GM12878 (cell line): ENCODE measurements at regions of chr10 and their contacts with region 1.

Region 1: DNA sequence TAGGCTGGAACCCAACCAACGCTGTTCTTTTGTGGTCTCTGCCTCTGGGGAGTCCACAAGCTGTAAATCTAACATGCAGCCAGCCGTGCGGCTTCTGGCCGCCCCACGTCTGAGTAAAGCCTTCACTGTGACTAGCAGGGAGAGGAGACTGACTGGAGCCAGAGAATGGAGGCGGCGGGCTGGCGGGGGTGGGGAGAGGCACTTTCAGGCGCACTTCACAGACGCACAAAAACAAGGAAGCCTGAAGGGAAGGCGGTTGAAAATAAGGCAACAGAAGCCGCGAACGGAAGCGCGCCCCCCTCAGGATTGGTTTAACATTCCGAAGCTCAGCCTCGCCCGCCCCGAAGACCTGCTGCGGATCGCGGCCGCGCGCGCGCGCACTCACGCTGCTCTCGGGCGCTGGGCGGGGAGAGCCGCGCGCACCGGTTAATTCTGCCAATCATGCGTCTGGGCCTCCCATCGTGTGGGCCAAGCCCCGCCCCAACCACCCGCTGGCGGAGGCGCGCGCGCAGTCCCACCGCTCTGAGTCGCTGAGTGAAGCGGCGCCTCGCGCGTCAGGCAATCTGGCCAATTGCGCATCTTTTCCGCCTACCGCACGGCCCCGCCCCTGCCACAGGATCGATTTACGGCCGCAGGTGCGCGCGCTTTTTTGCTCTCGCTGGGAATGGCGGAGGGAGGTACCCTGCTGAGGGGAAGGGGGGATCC is at the start of gene SFR1:
- DNase-seq: peak; percentile 93
- ATAC-seq: peak; percentile 93
- H3K4me3 ChIP-seq: peak within 1 kb of the TSS; percentile 98
- H3K27ac ChIP-seq: peak within 1 kb of the TSS; percentile 94
- H3K4me1 ChIP-seq: peaks cover 11% of the 10 kb centered on the region; the same call in 1 of the 2 replicates
- H3K27me3 ChIP-seq: no peaks in the 10 kb centered on the region; a peak in 1 of 4 replicates
- CTCF ChIP-seq: peak; percentile 56 to 81 (median 64); a peak in 5 of 6 replicates
- EP300 ChIP-seq: 0 out of 4 replicates have a peak, but pooled peaks of 1 of the 2 experiments have one; percentile 3
- POLR2A ChIP-seq: peak; percentile 87
- RAD21 ChIP-seq: 0 out of 2 replicates have a peak, but pooled peaks have one; percentile 20
- polyA plus RNA-seq, gene SFR1: 25.4 to 31.5 TPM

Region 2: DNA sequence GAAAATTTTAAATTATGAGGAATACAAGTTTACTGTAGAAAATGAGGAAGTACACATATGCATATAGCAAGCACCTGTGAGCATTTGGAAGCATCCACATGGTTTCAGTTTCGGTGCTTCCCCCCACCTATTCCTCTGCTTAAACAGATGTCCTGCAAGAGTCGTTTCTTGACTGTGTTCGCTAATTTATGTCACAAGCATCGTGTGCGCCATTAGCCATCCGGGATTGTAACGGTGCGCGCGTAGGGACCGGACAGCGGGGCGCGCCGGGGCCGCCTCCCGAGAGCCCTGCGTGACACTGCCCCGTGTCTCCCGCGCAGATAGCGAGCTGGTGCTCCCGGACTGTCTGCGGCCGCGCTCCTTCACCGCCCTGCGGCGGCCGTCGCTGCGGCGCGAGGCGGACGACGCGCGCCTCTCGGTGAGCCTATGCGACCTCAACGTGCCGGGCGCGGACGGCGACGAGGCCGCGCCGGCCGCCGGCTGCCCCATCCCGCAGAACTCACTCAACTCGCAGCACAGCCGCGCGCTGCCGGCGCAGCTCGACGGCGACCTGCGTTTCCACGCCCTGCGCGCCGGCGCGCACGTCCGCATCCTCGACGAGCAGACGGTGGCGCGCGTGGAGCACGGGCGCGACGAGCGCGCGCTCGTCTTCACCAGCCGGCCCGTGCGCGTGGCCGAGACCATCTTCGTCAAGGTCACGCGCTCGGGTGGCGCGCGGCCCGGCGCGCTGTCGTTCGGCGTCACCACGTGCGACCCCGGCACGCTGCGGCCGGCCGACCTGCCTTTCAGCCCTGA is 537.3 kb before region 1 on chr10:
- CTCF ChIA-PET with region 1: no interaction called
- POLR2A ChIA-PET with region 1: no interaction called
- RAD21 ChIA-PET with region 1: no interaction called
- SMC1A ChIA-PET with region 1: no interaction called
- in situ Hi-C with region 1: no loop called
- intact Hi-C with region 1: no loop called
- DNase-seq: no peak
- ATAC-seq: peak; percentile 41
- H3K4me3 ChIP-seq: peak overlapping the region; percentile 55; the same call in 1 of the 2 replicates
- H3K27ac ChIP-seq: no peak overlapping the region
- H3K4me1 ChIP-seq: 0 out of 2 replicates have a peak, but pooled peaks cover 5% of the 10 kb centered on the region
- H3K27me3 ChIP-seq: no peaks in the 10 kb centered on the region; a peak in 1 of 4 replicates
- CTCF ChIP-seq: no peak
- EP300 ChIP-seq: no peak
- POLR2A ChIP-seq: peak; percentile 68
- RAD21 ChIP-seq: no peak

Region 3: GRCh38 chr10:103696411-103697145 is 425.1 kb before region 1 on chr10:
- CTCF ChIA-PET with region 1: no interaction called
- POLR2A ChIA-PET with region 1: no interaction called
- RAD21 ChIA-PET with region 1: no interaction called
- SMC1A ChIA-PET with region 1: interaction called, 3 read pairs
- in situ Hi-C with region 1: no loop called
- intact Hi-C with region 1: loop called (anchors 10 kb)
- DNase-seq: no peak
- ATAC-seq: peak; percentile 61
- H3K4me3 ChIP-seq: no peak overlapping the region
- H3K27ac ChIP-seq: peak overlapping the region; percentile 54
- H3K4me1 ChIP-seq: peaks cover 29% of the 10 kb centered on the region
- H3K27me3 ChIP-seq: no peaks in the 10 kb centered on the region
- CTCF ChIP-seq: peak; percentile 33 to 50 (median 44); a peak in 5 of 6 replicates
- EP300 ChIP-seq: no peak
- POLR2A ChIP-seq: peak; percentile 55; the same call in 1 of the 2 replicates
- RAD21 ChIP-seq: no peak

Region 4: DNA sequence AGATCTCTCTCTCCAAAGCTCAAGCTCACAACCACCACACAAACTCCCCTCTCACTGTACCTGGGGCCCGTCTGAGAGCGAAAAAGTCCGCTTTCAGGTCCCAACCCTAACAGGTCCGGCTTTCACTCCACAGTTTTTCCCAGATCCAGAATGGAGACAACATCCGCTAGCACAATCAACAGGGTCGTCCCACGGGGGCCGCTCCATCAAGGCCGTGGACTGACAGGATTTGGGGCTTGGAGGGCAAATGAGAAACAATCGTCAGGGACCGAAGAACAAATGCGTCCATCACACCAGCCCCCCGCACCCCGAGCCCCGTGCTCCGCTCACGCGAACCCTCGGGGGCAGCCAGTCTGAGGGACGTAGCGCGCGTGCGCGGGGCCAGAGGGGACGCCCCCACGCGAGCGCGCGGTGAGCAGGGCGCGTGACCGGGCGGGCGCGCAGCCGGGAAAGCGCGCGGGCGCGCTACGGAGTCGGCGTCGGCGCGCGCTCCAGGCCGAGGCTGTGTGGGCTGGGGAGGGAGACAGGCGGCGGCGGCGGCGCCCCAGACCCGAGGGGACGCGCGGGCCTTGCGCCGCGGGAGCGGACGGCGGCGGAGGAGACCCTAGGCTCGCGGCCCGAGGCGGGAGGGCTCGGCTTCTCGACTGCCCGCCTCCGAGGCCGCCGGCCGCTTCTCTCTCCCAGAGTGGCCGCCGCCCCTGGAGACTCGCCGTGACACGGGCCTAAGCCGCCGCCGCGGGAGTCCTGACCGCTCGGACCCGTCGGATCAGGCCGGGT is 154.8 kb before region 1 on chr10 and contains the start of gene SLK:
- CTCF ChIA-PET with region 1: interaction called, 6 read pairs
- POLR2A ChIA-PET with region 1: interaction called, 19 read pairs
- RAD21 ChIA-PET with region 1: interaction called, 4 read pairs
- SMC1A ChIA-PET with region 1: interaction called, 5 read pairs
- in situ Hi-C with region 1: loop called (anchors 5 kb)
- intact Hi-C with region 1: loop called (anchors 1 kb)
- DNase-seq: no peak
- ATAC-seq: peak; percentile 75
- H3K4me3 ChIP-seq: peak within 1 kb of the TSS; percentile 87
- H3K27ac ChIP-seq: peak within 1 kb of the TSS; percentile 77
- H3K4me1 ChIP-seq: no peaks in the 10 kb centered on the region; the same call in 1 of the 2 replicates
- H3K27me3 ChIP-seq: no peaks in the 10 kb centered on the region
- CTCF ChIP-seq: no peak
- EP300 ChIP-seq: no peak
- POLR2A ChIP-seq: peak; percentile 92
- RAD21 ChIP-seq: no peak
- polyA plus RNA-seq, gene SLK: 6.0 to 6.4 TPM

Region 5: GRCh38 chr10:104005172-104005863 is 116.4 kb before region 1 on chr10:
- CTCF ChIA-PET with region 1: interaction called, 12 read pairs
- POLR2A ChIA-PET with region 1: interaction called, 6 read pairs
- RAD21 ChIA-PET with region 1: no interaction called
- SMC1A ChIA-PET with region 1: interaction called, 9 read pairs
- in situ Hi-C with region 1: no loop called
- intact Hi-C with region 1: no loop called
- DNase-seq: no peak
- ATAC-seq: no peak
- H3K4me3 ChIP-seq: no peak overlapping the region
- H3K27ac ChIP-seq: no peak overlapping the region
- H3K4me1 ChIP-seq: no peaks in the 10 kb centered on the region
- H3K27me3 ChIP-seq: no peaks in the 10 kb centered on the region
- CTCF ChIP-seq: no peak
- EP300 ChIP-seq: no peak
- POLR2A ChIP-seq: no peak
- RAD21 ChIP-seq: no peak

Region 6: GRCh38 chr10:104080762-104081161 is 40.9 kb before region 1 on chr10:
- CTCF ChIA-PET with region 1: interaction called, 40 read pairs
- POLR2A ChIA-PET with region 1: interaction called, 5 read pairs
- RAD21 ChIA-PET with region 1: interaction called, 11 read pairs
- SMC1A ChIA-PET with region 1: interaction called, 36 read pairs
- in situ Hi-C with region 1: no loop called
- intact Hi-C with region 1: no loop called
- DNase-seq: no peak
- ATAC-seq: peak; percentile 69
- H3K4me3 ChIP-seq: no peak overlapping the region
- H3K27ac ChIP-seq: no peak overlapping the region
- H3K4me1 ChIP-seq: no peaks in the 10 kb centered on the region
- H3K27me3 ChIP-seq: no peaks in the 10 kb centered on the region
- CTCF ChIP-seq: peak; percentile 47 to 53 (median 52); a peak in 5 of 6 replicates
- EP300 ChIP-seq: no peak
- POLR2A ChIP-seq: no peak
- RAD21 ChIP-seq: peak; percentile 46

Region 7: DNA sequence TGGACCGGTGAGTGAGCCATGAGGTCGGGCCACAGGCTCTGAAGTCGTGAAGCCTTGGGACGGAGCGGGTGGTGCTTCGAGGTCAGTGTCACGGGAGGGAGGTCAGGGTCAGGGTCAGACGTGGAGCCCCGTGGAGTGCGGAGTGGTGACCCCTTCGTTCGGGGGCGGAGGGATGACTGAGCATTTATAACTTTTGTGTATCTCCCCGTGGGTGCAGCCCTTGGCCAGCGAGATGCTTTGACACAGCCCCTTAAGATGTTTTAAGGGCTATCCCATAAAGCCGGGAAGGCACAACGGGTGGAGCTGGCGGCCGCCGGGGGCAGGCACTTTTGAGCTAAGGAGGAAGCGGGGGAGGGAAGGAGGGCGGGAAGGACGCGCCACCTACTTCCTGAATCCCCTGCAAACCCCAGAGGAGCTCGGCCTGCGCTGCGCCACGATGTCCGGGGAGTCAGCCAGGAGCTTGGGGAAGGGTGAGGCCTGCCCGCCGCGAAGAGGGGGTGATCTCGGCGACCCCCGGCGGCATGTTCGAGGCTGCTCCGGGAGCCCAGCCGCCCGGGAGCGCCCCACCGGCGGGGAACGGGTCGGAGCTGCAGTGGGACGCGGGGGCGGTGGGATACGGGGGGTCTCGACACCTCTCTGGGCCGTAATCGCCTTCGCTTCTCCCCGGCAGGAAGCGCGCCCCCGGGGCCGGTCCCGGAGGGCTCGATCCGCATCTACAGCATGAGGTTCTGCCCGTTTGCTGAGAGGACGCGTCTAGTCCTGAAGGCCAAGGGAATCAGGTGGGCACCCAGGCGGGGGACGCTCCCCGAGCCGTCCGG is 133.0 kb after region 1 on chr10 and contains the start of gene GSTO1:
- CTCF ChIA-PET with region 1: no interaction called
- POLR2A ChIA-PET with region 1: interaction called, 14 read pairs
- RAD21 ChIA-PET with region 1: interaction called, 3 read pairs
- SMC1A ChIA-PET with region 1: interaction called, 5 read pairs
- in situ Hi-C with region 1: no loop called
- intact Hi-C with region 1: no loop called
- DNase-seq: peak; percentile 30
- ATAC-seq: peak; percentile 89
- H3K4me3 ChIP-seq: peak within 1 kb of the TSS; percentile 81
- H3K27ac ChIP-seq: peak within 1 kb of the TSS; percentile 89
- H3K4me1 ChIP-seq: peaks cover 8% of the 10 kb centered on the region
- H3K27me3 ChIP-seq: no peaks in the 10 kb centered on the region
- CTCF ChIP-seq: peak in 1 of 3 experiments; percentile 18; a peak in 1 of 6 replicates
- EP300 ChIP-seq: no peak
- POLR2A ChIP-seq: peak; percentile 94
- RAD21 ChIP-seq: no peak
- polyA plus RNA-seq, gene GSTO1: 53.1 to 149 TPM

Region 8: GRCh38 chr10:104515678-104516222 is 394.1 kb after region 1 on chr10:
- CTCF ChIA-PET with region 1: no interaction called
- POLR2A ChIA-PET with region 1: no interaction called
- RAD21 ChIA-PET with region 1: no interaction called
- SMC1A ChIA-PET with region 1: no interaction called
- in situ Hi-C with region 1: no loop called
- intact Hi-C with region 1: no loop called
- DNase-seq: no peak
- ATAC-seq: no peak
- H3K4me3 ChIP-seq: no peak overlapping the region
- H3K27ac ChIP-seq: no peak overlapping the region
- H3K4me1 ChIP-seq: no peaks in the 10 kb centered on the region
- H3K27me3 ChIP-seq: no peaks in the 10 kb centered on the region
- CTCF ChIP-seq: no peak
- EP300 ChIP-seq: no peak
- POLR2A ChIP-seq: no peak
- RAD21 ChIP-seq: no peak